ENCODE measurements at regions of chr7 and their contacts with region 1.

Region 1: DNA sequence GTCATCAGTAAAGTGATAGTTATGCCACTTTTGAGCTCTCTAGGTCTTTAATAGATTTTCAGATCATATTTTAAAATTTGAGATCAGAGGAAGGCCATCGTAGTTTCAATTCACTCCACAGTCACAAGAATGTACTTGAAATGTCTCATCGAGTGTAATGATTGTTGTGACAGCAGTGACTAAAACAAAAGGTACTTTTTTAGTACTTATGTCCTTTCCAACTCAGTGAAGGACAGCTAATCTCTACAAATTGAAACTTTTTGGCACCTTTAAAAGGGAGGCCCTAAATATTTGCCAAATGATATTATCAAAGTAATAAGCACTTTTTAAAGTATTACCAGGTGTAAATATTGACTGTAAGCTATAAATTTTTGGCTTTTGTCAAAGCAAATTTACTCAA is 702.9 kb upstream of the GRM3 start:
- DNase-seq: no peak
- ATAC-seq: no peak
- H3K4me3 ChIP-seq: no peak overlapping the region
- H3K27ac ChIP-seq: no peak overlapping the region
- H3K4me1 ChIP-seq: no peaks in the 10 kb centered on the region
- H3K27me3 ChIP-seq: no peaks in the 10 kb centered on the region
- CTCF ChIP-seq: no peak

Region 2: GRCh38 chr7:85423209-85423895 is 517.4 kb before region 1 on chr7:
- CTCF ChIA-PET with region 1: no interaction called
- POLR2A ChIA-PET with region 1: no interaction called
- in situ Hi-C with region 1: no loop called
- intact Hi-C with region 1: no loop called
- DNase-seq: no peak
- ATAC-seq: no peak
- H3K4me3 ChIP-seq: no peak overlapping the region
- H3K27ac ChIP-seq: no peak overlapping the region
- H3K4me1 ChIP-seq: no peaks in the 10 kb centered on the region
- H3K27me3 ChIP-seq: no peaks in the 10 kb centered on the region
- CTCF ChIP-seq: no peak

Region 3: DNA sequence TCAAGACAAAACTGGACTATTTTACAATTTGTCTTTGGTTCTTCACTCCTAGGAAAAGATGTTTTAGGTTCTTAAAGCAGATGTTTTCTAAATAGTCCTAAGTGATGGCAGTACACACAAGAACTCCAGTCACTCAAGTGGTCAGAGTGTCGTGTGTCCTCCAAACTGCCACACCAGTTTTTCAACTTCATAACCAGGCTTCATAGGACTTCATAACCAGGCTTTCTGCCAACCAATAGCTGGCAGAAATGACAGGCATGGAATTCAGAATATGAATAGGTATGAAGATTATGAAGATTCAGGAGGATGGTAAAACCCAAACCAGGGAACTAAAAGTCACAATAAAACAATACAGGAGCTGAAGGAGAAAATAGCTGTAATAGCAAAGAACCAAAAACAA is 32.7 kb before region 1 on chr7:
- CTCF ChIA-PET with region 1: no interaction called
- POLR2A ChIA-PET with region 1: no interaction called
- in situ Hi-C with region 1: no loop called
- intact Hi-C with region 1: no loop called
- DNase-seq: no peak
- ATAC-seq: no peak
- H3K4me3 ChIP-seq: no peak overlapping the region
- H3K27ac ChIP-seq: no peak overlapping the region
- H3K4me1 ChIP-seq: no peaks in the 10 kb centered on the region
- H3K27me3 ChIP-seq: no peaks in the 10 kb centered on the region
- CTCF ChIP-seq: no peak

Region 4: GRCh38 chr7:85954961-85955360 is 14.2 kb after region 1 on chr7:
- CTCF ChIA-PET with region 1: no interaction called
- POLR2A ChIA-PET with region 1: no interaction called
- in situ Hi-C with region 1: no loop called
- intact Hi-C with region 1: loop called (anchors 2 kb)
- DNase-seq: no peak
- ATAC-seq: no peak
- H3K4me3 ChIP-seq: no peak overlapping the region
- H3K27ac ChIP-seq: no peak overlapping the region
- H3K4me1 ChIP-seq: no peaks in the 10 kb centered on the region
- H3K27me3 ChIP-seq: no peaks in the 10 kb centered on the region
- CTCF ChIP-seq: no peak

Measured in Panc1 (cell line).